ENCODE measurements at regions of chr5 and their contacts with region 1.

Region 1: GRCh38 chr5:173283318-173284288 is 44.6 kb downstream of the STC2 start:
- DNase-seq: peak; percentile 86

Region 2: DNA sequence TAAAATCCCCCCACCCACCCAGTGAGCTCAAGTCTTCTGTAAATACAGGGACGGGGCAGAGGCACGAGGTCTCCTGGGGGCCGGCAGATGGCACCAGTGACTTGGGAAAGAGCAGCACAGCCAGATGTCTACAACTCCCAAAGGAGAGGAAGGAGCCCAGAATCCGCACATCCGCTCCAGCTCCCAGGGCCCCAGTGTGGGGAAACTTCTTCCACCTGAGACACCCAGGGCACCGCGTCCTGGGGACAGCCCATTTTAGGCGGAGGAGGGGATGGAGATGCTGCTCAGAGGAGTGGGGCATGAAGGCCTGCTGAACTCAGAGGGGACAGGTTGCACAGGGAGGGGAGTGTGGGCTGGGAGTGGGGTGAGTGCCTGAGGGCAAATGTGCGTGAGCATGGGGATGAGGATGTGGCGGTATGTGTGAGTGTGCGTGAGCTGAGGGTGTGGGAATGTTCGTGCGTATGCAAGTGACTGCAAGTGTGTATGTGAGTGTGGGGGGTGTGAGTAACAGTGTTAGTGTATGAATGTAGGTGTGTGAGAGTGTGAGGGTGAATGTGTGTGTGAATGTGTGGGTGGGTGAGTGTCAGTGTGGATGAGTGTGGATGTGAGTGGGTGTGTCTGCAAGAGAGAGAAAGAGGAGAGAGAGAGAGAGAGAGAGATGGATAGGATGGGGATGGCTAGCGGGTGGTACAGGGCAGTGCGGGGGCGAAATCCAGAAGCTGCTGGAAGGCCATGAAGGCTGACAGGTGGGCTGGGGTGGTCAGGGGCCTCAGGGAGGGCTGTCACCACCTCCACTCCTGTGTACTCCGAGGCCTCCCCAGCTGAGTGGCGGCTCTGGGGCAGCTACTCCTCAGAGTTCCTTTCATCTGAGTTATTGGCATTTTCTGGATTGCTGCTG is 576.1 kb before region 1 on chr5:
- intact Hi-C with region 1: loop called (anchors 5 to 10 kb)
- DNase-seq: peak; percentile 75

Region 3: DNA sequence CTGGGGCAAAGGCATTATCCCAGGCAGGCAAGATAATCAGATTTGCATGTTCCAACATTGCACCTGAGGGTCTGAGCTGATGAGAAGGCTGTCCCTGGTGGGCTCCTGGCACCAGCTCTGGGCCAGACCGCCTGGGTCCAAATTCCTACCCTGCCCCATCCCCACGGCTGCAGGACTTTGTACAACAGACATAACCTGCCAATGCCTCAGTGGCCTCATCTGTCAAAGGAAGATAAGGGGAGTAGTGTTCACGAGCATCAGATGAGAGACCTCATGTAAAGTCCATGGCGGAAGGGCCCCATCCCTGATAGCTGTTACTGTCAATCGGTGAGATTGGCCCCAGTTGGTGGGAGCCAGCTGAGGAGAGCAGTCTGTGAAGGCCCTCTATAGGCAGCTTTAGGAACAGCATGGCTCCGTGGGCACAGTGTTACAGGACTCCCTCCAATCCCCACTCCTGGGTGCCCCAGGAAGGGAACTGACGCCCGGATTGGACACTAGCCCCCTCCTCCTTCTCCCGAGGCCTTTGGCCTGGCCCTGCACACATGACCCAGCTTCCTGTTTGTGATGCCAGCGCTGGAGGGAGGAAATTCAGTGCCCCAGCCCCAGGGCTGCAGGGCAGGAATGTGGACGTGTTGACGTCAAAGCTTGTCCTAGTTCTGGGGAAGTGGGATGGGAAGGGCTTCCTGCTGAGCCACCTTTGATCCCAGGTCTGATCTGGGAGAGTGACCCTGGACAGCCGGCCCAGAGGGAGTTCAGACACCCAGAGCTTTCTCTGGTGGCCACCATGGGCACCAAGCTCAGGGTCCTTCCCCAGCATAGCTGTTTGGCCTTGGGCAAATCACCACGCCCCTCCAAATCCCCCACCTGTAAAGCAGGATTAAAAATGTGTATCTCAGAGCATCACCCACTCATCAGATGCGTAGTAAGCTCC is 568.8 kb before region 1 on chr5:
- intact Hi-C with region 1: loop called (anchors 5 to 10 kb)
- DNase-seq: peak; percentile 95